HEK293T (cell line): ENCODE measurements at regions of chr3 and their contacts with region 1.

Region 1: DNA sequence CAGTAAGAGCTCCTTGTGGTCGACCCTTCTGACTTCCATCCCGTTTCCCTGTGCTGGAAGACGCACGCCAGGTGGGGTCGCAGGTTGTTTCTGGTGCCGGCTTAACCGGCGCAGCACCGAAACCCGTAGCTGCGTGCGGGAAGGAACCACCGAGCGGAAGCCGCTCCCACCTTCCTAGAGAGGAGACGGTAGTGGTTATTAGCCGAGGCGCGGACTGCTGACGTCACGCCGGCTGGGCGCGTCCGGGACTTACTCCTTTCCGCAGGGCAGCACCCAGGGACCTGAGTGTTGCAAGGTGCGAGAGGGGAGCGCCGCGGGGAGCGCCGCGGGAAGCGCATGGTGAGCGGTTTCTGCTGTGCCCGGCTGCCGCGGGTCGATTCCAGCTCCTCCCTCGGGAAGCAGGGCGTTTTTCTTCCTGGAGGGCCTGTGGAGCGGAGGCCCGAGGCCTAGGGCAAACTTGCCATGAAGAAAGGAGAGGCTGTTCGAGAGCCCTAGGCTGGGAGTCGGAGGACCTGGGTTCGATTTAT is at the start of gene ZNF501:
- DNase-seq: peak; percentile 64

Region 2: GRCh38 chr3:44712455-44713075 is 16.9 kb before region 1 on chr3 and contains the start of gene ZNF502:
- CTCF ChIA-PET with region 1: no interaction called
- POLR2A ChIA-PET with region 1: interaction called, 17 read pairs
- DNase-seq: peak; percentile 68

Region 3: GRCh38 chr3:44761424-44762169 is 32.1 kb after region 1 on chr3 and contains the starts of genes KIAA1143 and KIF15:
- CTCF ChIA-PET with region 1: no interaction called
- POLR2A ChIA-PET with region 1: interaction called, 21 read pairs
- DNase-seq: peak; percentile 93